Dorsolateral prefrontal cortex (tissue), 120 donors: ENCODE measurements at regions of chr5 and their contacts with region 1.

Region 1: DNA sequence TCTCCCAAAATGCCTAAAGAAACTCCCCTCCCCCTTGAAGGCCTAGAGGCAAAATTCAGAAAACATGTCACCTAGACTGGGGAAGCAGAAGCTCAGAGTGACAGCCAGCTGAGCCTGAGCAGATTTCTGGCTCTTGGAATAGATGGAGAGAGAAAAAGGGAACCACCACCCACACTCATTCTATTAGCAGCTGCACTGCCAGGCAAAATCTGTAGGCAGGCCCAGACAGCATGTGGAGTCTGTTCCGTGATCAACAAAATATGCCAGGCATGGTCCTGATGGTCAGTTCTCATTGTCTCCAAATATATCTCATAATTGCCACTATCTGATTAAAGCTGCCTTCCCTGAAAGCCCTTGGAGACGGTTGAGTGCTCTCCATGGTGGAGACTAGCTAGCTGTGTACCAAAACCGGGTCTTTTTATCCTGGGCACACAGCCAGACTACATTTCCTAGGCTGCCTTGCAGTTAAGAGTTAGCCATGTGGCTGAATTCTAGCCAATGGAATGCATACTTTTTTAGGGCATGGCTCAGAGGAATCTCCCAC is 131.7 kb upstream of the GPR151 start:
- DNase-seq: peak in 9 of 10 donors; percentile 25 to 73 (median 54)
- H3K4me3 ChIP-seq: no peak overlapping the region
- H3K27ac ChIP-seq: peak overlapping the region in 49 of 59 donors; percentile 6 to 83 (median 59)
- H3K27me3 ChIP-seq: no peaks in the 10 kb centered on the region
- CTCF ChIP-seq: no peak

Region 2: DNA sequence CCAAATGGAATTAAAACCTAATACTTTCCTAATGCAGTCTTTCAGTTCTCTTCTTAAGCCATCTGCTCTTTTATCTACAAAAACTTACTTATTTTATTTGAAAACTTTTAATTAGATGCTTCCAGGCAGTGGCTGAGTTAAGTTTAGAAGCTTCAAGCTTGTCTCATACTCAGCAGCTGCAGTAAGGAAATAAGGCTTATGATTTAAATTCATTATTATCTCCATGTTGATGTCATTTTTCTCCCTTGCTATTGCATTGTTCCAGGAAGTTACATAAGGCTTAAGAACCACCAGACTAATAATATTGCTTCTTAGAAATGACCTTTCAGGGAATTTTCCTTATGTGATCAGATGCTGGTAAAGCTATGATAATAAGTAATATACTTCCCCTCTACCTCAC is 111.2 kb after region 1 on chr5:
- intact Hi-C with region 1: loop called in 1 of 2 experiments (anchors 5 kb)
- DNase-seq: no peak
- H3K4me3 ChIP-seq: no peak overlapping the region
- H3K27ac ChIP-seq: peak overlapping the region in 22 of 59 donors; percentile 1 to 56 (median 30)
- H3K27me3 ChIP-seq: no peaks in the 10 kb centered on the region
- CTCF ChIP-seq: no peak

Region 3: DNA sequence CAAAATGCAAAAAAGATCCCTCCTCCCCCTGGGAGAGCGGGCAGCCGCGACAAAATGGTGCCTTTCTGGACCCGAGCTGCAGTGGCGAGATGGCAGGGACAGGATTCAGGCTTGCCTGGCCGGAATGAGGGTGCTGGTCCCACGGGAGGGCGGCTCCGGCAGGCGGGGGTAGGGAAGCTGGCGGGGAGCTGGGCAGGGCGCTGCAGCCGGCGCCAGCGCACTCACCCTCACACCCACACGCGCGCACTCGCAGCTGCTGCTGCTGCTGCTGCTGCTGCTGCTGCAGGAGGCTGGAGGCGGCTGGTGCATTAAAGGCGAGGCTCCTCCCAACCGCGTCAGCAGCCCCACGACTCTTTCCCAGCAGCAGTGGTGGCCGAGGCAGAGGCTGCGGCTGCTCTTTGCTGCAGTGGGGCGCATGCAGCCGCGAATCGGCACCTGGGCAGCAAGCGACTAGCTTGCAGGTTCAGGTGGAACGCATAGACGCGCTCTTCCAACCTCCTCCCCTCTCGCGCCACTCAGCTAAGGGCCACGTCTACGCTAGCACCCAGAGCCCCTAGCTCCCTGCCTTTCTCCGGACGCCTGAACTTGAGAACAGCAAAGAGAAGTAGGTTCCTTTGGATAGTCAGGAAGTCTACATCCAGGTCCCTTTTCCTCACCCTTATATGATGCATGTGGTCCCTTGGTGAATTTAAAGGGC is 230.9 kb after region 1 on chr5 and contains the start of gene PPP2R2B:
- intact Hi-C with region 1: loop called in 1 of 2 experiments (anchors 10 kb)
- DNase-seq: peak; percentile 45 to 88 (median 74)
- H3K4me3 ChIP-seq: peak within 1 kb of the TSS; percentile 53 to 82 (median 68)
- H3K27ac ChIP-seq: peak within 1 kb of the TSS in 58 of 59 donors; percentile 35 to 94 (median 85)
- H3K27me3 ChIP-seq: no peaks in the 10 kb centered on the region
- CTCF ChIP-seq: peak in 1 of 56 donors; percentile 29
- total RNA-seq, gene PPP2R2B: 125 to 253 (median 180) TPM

Region 4: GRCh38 chr5:146947181-146947941 is 299.6 kb after region 1 on chr5:
- intact Hi-C with region 1: loop called (anchors 5 to 10 kb)
- DNase-seq: peak in 1 of 10 donors; percentile 17
- H3K4me3 ChIP-seq: no peak overlapping the region
- H3K27ac ChIP-seq: peak overlapping the region in 1 of 59 donors; percentile 43
- H3K27me3 ChIP-seq: no peaks in the 10 kb centered on the region
- CTCF ChIP-seq: peak in 53 of 56 donors; percentile 16 to 61 (median 45)